ENCODE measurements at regions of chr2 and their contacts with region 1.

Region 1: DNA sequence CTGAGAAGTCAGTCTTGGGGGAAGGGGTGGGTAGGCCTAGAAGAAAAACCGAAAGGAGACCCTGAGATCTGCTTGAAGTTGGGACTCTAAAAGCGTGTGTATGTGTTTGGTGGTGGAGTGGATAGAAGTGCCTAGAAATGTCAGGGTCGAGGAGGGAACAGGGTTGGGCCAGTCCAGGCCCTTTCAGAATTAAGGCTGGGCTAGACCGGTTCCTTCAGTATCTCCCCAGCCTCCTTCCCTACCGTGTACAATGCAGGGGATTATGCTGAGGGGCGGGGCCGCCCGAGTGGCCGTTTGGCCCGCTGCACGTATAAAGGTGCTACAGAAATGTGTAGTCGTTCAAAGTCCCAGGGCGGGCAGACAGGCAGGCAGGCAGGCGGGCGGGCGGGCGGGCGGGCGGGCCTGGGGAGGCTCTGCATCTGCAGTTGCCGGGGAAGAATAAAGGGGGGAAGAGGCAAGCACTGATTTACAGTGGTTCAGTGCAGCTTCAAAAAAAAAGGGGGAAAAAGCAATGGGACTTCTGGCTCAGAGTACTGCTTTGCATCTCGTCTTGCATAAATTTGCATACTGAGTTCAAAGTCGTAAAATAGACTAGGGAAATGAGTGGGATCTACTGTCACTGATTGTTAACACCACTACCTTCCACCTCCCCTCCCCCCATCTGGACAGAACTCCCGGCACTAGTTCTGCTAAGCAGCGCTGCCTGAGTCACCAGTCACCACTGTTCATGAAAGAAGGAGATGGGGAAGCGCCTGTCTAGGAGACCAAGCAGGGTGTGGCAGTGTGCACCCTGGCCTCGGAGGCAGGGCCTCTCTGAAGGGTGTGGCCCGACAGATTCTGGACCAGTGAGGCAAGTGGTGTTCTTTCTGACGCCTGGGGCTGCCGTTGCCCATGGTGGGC is 3.6 kb downstream of the IGFBP2 start:
- DNase-seq: peak; percentile 78
- ATAC-seq: peak; percentile 90
- H3K4me3 ChIP-seq: peak overlapping the region in 2 of 3 experiments; percentile 13 to 57; a peak in 2 of 6 replicates
- H3K27ac ChIP-seq: no peak overlapping the region
- H3K4me1 ChIP-seq: peaks cover 45% of the 10 kb centered on the region
- H3K27me3 ChIP-seq: peaks cover 8 to 51% of the 10 kb centered on the region in 2 experiments; a peak in 4 of 5 replicates
- CTCF ChIP-seq: no peak
- EP300 ChIP-seq: no peak
- POLR2A ChIP-seq: no peak
- RAD21 ChIP-seq: no peak

Region 2: GRCh38 chr2:216553093-216553478 is 83.7 kb before region 1 on chr2:
- CTCF ChIA-PET with region 1: no interaction called
- POLR2A ChIA-PET with region 1: no interaction called
- in situ Hi-C with region 1: no loop called
- intact Hi-C with region 1: loop called (anchors 1 kb)
- DNase-seq: peak; percentile 96
- ATAC-seq: peak; percentile 94
- H3K4me3 ChIP-seq: no peak overlapping the region
- H3K27ac ChIP-seq: peak overlapping the region; percentile 65
- H3K4me1 ChIP-seq: peaks cover 65% of the 10 kb centered on the region
- H3K27me3 ChIP-seq: no peaks in the 10 kb centered on the region
- CTCF ChIP-seq: no peak; the same call in 1 of the 2 replicates
- EP300 ChIP-seq: peak; percentile 66 to 79; a peak in 3 of 4 replicates
- POLR2A ChIP-seq: no peak
- RAD21 ChIP-seq: peak; percentile 22; the same call in 1 of the 2 replicates

Region 3: DNA sequence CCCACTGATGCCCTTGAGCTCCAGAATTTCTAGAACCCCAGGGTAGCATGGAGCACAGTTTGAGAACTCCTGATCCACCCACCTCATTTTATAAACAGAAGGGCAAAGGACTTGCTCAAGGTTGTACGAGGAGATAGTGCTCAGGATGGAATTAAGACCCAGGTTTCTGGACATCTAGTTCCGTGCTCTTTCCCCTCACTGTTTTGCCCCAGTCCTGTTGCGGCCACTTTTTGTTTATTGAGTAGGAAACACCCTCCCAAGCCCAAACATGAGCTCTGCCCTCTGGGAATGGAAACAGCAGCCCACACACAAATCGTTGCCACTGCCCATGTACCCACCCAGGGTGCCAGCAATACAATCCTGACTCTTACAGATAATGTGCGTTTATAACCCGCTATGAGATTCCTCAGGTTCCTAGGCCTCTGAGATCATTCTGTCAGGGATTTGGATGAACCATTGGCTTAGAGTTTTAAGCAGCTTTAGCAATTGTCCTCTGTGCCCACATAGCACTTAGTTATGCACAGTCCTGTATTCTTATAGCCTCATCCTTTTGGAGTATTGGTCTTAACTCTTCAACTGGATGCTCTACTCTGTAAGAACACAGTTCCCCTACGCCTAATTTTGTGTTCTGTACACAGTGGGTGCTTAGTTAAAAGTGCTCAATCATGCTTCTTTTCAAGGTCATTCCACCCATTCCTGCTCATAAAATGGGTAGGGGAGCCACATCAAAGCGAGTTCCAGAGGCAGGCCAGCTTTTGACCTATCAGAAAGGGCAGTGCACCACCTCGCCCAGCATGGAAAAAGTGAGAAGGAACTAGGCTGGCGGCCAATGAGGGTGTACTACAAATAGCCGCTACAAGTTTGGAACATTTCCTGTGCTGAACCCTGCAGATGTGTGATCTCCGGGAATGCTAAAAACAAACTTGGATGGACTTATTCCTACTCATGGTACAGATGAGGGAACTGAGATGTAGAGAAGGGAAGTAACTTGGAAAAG is 63.9 kb before region 1 on chr2:
- CTCF ChIA-PET with region 1: no interaction called
- POLR2A ChIA-PET with region 1: no interaction called
- in situ Hi-C with region 1: no loop called
- intact Hi-C with region 1: no loop called
- DNase-seq: peak; percentile 78
- ATAC-seq: peak; percentile 66
- H3K4me3 ChIP-seq: peak overlapping the region; percentile 4 to 58 (median 7); a peak in 4 of 6 replicates
- H3K27ac ChIP-seq: peak overlapping the region; percentile 74
- H3K4me1 ChIP-seq: peaks cover 79% of the 10 kb centered on the region
- H3K27me3 ChIP-seq: no peaks in the 10 kb centered on the region; a peak in 1 of 5 replicates
- CTCF ChIP-seq: no peak
- EP300 ChIP-seq: 0 out of 4 replicates have a peak, but pooled peaks of 1 of the 2 experiments have one; percentile 62
- POLR2A ChIP-seq: peak in 1 of 2 experiments; percentile 36; a peak in 1 of 4 replicates
- RAD21 ChIP-seq: no peak

Region 4: DNA sequence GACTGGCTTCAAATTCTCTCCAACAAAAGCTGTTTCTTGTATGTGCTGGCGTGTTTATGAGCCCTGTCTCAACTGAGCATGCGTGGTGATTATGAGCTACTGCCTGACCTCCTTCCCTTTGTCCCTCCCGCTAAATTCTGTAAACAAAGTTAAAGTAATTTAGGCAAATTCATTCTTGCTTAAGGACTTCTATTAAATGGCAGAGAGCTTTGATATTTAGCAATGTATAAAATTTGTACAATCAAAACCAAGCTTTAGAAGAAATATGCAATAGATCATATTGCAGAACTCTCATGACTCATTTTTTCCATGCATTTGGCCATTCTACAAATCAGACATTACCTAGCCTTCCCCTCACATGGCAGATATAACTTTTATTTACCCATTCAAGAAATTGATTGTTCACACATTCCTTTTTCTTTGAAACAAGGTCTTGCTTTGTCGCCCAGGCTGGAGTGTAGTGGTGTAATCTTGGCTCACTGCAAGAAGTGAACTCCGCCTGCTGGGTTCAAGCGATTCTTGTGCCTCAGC is 14.6 kb after region 1 on chr2:
- CTCF ChIA-PET with region 1: no interaction called
- POLR2A ChIA-PET with region 1: no interaction called
- in situ Hi-C with region 1: no loop called
- intact Hi-C with region 1: loop called (anchors 2 kb)
- DNase-seq: no peak
- ATAC-seq: no peak
- H3K4me3 ChIP-seq: no peak overlapping the region
- H3K27ac ChIP-seq: no peak overlapping the region
- H3K4me1 ChIP-seq: peaks cover 56% of the 10 kb centered on the region
- H3K27me3 ChIP-seq: peaks cover 0 to under 1% of the 10 kb centered on the region in 2 experiments; a peak in 1 of 5 replicates
- CTCF ChIP-seq: no peak
- EP300 ChIP-seq: no peak
- POLR2A ChIP-seq: no peak
- RAD21 ChIP-seq: no peak

Region 5: GRCh38 chr2:216679221-216680019 is 42.6 kb after region 1 on chr2:
- CTCF ChIA-PET with region 1: no interaction called
- POLR2A ChIA-PET with region 1: no interaction called
- in situ Hi-C with region 1: no loop called
- intact Hi-C with region 1: no loop called
- DNase-seq: no peak
- ATAC-seq: no peak
- H3K4me3 ChIP-seq: no peak overlapping the region
- H3K27ac ChIP-seq: no peak overlapping the region
- H3K4me1 ChIP-seq: no peaks in the 10 kb centered on the region
- H3K27me3 ChIP-seq: peaks cover 3 to 61% of the 10 kb centered on the region in 2 experiments
- CTCF ChIP-seq: no peak
- EP300 ChIP-seq: no peak
- POLR2A ChIP-seq: no peak
- RAD21 ChIP-seq: no peak

Region 6: DNA sequence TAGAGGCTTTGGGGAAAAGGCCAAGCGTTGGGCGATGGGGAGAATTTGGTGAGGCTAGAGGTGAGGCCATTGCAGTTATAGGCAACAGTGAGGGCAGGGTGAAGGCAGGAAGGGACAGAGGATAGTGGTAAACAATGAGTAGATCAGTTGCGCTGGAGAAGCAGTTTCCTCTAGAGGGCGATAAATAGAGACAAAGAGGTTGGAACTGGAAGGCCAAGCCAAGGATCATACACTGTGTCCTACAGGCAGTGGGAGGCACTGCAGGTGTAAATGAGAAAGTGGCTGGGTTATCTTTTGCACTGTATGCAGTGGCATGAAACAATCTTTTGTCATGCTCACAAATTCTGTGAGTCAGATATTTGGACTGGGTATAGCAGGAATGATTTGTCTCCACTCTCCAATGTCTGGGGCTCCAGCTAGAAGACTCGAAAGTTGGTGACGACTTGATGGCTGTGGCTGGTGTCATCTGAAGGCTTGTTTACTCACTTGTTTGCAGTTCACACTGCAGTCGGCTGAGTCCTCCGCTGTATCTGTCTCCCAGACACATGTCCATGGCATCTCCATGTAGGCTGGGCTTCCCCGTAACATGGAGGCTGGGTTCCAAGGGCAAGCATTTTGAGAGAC is 141.0 kb after region 1 on chr2:
- CTCF ChIA-PET with region 1: no interaction called
- POLR2A ChIA-PET with region 1: no interaction called
- in situ Hi-C with region 1: no loop called
- intact Hi-C with region 1: no loop called
- DNase-seq: peak; percentile 89
- ATAC-seq: peak; percentile 98
- H3K4me3 ChIP-seq: no peak overlapping the region
- H3K27ac ChIP-seq: no peak overlapping the region
- H3K4me1 ChIP-seq: peaks cover 16% of the 10 kb centered on the region
- H3K27me3 ChIP-seq: peaks cover 0 to 16% of the 10 kb centered on the region in 2 experiments; a peak in 2 of 5 replicates
- CTCF ChIP-seq: peak; percentile 88
- EP300 ChIP-seq: peak in 1 of 2 experiments; percentile 42; a peak in 1 of 4 replicates
- POLR2A ChIP-seq: no peak
- RAD21 ChIP-seq: peak; percentile 87

Region 7: DNA sequence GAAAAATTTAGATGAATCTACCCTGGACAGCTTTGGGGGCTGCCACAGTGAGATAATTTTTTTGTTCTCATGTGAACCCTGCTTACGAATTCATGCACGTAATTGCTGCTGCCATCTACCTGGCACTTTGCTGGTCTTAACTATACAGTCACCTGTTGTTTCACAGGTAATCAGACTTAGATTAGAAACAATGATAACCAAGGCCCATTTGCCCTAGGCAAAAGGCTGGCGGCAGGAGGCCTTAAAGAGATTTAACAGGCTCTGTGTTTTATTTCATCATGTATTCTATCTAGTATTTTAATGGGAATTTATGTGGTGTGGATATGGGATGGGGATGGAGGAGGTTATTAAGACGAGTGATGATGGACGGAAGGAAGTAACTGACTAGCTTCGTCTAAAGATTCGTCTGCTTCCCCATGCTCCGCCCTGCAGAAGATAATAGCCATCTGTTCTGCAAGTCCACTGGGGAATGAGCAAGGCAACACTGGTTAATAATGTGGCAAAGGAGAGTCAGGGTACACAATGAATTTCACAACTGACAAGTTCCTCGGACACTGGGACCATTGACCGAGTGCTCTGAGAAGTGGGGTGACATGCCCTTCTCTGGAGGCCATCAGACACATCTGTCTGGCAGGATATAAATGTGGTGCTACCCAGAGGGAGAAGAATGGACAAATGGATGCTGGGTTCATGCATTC is 514.9 kb after region 1 on chr2:
- CTCF ChIA-PET with region 1: no interaction called
- POLR2A ChIA-PET with region 1: no interaction called
- in situ Hi-C with region 1: no loop called
- intact Hi-C with region 1: no loop called
- DNase-seq: no peak
- ATAC-seq: no peak
- H3K4me3 ChIP-seq: no peak overlapping the region
- H3K27ac ChIP-seq: no peak overlapping the region
- H3K4me1 ChIP-seq: no peaks in the 10 kb centered on the region
- H3K27me3 ChIP-seq: peaks cover 2 to 14% of the 10 kb centered on the region in 2 experiments; a peak in 3 of 5 replicates
- CTCF ChIP-seq: no peak
- EP300 ChIP-seq: no peak
- POLR2A ChIP-seq: no peak
- RAD21 ChIP-seq: no peak